ENCODE measurements at regions of chrX and their contacts with region 1.

Region 1: DNA sequence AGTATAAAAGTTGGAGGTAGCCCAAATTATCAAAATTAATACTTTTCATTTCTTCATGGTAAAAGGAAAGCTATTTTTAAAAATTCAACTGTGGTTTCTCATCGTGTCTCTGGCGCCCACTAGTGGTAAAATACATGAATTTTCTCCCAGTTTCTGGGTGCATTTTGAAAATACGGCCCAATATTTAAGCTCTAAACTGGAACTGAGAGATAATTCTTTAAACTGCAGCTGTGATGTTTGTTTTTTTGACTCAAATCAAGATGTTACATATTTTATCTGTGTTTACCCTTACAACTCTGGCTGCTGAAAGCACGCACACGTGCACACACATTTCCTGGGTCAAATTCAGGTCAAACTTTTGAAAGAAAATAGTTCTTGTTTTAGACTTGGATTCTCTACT is 123.9 kb upstream of the ACSL4 start:
- DNase-seq: no peak
- H3K4me3 ChIP-seq: no peak overlapping the region
- CTCF ChIP-seq: peak; percentile 34

Region 2: DNA sequence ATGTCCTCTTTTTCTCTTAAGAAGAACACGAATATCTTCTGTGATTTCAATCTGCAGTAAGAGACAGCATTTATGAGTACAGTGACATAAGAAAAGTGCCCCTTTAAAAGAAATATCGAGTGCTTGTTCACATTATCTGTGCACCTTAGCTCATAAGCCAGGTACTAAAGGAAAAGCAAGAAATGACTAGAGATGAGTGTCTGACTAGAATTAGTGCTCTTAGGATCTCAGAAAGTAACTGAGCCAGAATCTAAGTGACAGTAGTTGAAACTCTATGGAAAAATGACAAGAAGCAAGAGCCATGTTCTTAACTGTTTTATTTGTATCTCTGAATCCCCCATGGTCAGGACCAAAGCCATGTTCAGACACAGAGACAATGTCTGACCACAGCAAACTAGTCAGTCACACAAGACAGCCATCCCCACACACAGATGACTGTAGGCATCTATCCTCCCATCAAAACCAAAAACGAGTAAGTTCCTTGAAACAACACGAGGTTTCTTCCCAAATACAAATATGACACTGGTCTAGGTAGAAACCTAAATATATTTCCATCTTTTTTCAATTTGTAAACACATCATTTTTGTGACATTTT is 160.7 kb before region 1 on chrX:
- CTCF ChIA-PET with region 1: interaction called, 10 read pairs
- POLR2A ChIA-PET with region 1: no interaction called
- DNase-seq: no peak
- H3K4me3 ChIP-seq: no peak overlapping the region
- CTCF ChIP-seq: no peak

Region 3: DNA sequence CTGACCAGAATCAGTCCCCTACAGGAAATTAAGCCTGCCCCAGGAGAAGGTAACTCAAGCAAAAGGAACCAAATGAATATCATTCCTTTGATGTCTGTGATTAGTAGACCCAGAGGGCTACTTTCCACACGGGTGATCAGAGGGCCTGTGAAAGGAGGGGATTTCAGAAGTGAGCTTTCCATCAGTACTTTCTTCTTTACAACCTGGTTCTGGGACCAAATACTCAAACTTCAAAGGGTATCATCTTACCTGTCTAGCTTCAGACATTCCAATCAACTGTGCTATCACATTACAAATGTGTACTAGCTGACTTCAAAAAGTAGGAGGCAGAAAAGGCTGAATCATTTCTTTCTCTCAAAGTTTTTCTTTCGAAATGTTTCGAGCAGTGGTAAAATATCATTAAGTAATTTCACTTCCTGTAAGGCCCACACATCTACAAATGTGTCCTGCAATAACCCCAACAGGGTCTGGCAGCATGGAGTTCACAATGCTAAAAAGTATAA is 147.8 kb before region 1 on chrX:
- CTCF ChIA-PET with region 1: interaction called, 158 read pairs
- POLR2A ChIA-PET with region 1: interaction called, 4 read pairs
- DNase-seq: no peak
- H3K4me3 ChIP-seq: no peak overlapping the region
- CTCF ChIP-seq: no peak

Region 4: DNA sequence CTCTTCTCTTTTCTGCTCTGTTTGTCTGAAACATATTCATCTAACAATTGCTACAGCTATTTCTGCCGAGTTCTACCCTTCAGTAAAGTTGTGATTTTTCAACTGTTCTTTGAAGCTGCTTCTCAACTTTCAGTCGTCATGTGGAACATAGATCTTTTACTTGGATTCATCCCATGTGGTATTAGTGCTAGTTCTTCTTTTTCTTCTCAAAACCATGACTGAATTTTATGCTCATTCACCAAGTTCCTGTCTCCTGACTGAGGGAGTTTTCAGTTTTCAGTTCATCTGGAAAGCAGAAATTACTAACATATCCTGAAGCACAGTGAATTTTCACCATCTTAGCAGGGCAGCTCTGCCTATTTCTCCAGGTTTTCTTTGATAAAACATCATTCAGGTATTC is 136.0 kb before region 1 on chrX:
- CTCF ChIA-PET with region 1: interaction called, 22 read pairs
- POLR2A ChIA-PET with region 1: no interaction called
- DNase-seq: no peak
- H3K4me3 ChIP-seq: no peak overlapping the region
- CTCF ChIP-seq: no peak

Region 5: DNA sequence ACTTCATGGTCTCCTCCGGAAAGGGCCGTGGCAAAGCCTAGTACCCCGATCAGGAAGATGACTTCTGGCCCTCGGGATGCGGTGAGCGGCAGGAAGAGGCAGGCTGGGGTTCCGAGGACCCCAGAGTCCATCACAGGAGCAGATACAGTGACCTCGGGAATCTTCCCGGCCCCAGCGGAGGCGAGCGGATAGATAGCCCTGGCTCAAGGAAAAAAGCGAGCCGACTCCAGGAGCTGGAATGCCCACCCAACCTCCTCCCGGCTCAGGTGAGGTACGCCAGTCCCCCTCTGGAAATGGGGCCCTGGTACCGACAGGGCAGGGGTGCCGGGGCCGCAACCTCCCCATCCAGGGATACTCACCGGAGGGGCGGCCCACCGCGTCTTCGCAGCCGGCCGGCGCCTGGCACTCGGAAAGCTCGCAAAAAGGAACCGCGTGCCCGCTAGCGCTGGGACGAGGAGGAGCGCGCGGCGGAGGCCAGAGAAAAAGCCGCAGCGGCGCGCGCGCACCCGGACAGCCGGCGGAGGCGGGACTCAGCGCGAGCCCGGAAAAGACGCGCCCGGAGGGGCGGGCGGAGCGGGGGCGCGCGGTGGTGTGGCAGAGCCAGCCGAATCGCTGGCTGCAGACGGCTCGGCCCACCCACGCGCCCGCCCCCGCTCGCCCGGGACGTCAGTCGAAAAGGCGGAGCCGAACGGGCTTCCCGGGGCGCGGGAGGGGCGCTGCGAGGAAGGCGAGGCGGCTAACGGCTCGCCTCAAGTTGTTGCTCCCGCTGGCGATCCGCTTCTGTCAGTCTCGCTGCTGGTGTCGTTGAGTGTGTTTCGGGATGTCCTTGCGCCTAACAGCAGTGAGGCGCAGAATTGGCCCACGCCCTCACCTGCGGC is 124.0 kb before region 1 on chrX and contains the start of gene ACSL4:
- CTCF ChIA-PET with region 1: interaction called, 10 read pairs
- POLR2A ChIA-PET with region 1: no interaction called
- DNase-seq: no peak
- H3K4me3 ChIP-seq: peak within 1 kb of the TSS; percentile 76
- CTCF ChIP-seq: no peak

Region 6: DNA sequence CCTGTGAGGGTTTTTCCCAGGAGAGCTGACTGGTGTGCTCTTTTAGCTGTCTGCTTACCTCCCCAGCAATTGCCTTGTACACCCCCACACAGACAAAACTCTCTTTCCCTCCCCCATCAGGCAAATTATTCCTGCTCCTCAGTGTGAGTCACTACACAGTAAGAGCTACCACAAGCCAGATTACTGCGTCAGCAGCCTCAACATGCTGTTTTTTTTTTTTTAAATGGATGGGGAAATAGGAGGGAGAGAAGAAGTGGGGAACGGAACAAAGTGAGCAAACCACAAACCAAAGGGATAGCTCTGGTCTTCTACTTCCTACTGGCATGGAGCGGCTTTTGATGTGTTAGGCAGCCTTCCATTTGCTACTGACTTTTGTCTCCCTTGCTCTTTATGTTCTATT is 16.4 kb before region 1 on chrX:
- CTCF ChIA-PET with region 1: interaction called, 21 read pairs
- POLR2A ChIA-PET with region 1: no interaction called
- DNase-seq: peak; percentile 83
- H3K4me3 ChIP-seq: no peak overlapping the region
- CTCF ChIP-seq: no peak

Region 7: DNA sequence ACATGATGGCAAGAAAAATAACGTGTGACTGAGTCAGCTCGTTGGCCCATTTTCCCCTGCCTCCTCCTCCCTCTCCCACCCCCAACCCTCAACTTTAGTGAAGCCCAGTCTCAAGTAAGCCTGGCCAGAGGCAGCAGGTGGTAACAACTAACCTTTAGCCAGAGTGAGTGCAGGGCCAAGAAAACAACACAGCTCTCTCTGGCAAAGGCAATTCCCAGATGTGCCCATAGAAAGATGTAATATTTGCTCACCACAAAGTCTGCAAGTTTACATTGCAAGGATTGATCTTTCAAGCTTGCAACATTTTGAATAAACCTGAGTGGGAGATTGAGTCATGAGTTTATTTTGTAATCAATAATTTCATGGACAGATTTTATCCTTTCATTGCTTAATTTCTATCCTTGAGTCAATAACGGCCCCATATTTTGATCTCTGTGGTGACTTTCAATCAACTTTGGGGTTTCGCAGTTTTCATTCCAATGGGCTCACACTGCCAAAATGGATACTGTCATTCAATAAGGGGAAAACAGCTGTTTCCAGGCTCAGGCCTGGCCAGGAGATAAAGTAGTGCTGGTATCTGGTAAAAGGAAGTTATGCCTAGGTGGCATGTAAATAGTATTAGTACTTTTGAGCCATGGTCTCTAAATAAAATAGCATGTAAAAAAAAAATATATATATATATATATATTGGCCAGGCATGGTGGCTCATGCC is 15.2 kb after region 1 on chrX:
- CTCF ChIA-PET with region 1: interaction called, 22 read pairs
- POLR2A ChIA-PET with region 1: no interaction called
- DNase-seq: no peak
- H3K4me3 ChIP-seq: no peak overlapping the region
- CTCF ChIP-seq: no peak

Measured in AG04449 (cell line).